MCF 10A (cell line): ENCODE measurements at regions of chr1 and their contacts with region 1.

Region 1: DNA sequence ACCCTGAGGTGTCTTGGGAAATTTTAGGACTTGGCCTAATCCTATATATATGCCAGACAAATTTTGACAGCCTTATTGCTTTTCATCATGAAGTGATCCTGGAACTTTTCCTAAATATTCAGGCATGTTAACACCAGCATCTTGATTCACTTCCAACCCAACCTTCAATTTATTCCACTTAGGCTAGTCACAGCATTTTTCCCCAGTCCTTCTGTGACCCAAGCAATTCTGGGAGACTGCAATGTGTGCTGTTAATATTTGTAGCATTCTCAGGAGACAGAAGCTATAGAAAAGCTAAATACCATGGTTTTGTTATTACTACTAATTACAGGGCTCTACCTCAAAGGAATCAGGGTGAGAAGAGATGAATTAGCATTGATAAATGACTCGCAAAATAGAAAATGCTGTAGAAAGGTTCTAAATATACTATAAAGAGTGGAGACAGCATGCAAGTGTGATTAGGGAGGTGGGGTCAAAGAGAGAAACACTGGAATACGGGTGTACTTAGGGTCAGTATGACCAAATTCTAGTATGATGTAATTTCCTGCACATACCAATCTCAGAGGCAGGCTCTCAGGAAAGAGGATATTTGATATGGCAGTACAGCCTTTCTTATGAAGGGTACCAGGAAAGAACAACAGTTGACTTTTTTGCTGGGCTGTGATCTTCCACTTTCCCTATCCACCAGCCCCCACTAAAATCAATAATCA is 29.1 kb downstream of the PRRX1 start:
- DNase-seq: peak; percentile 35
- H3K4me3 Mint-ChIP-seq: no peak overlapping the region
- H3K27ac Mint-ChIP-seq: no peak overlapping the region
- H3K4me1 Mint-ChIP-seq: peaks cover 21% of the 10 kb centered on the region
- H3K27me3 Mint-ChIP-seq: no peaks in the 10 kb centered on the region
- CTCF ChIP-seq: no peak

Region 2: DNA sequence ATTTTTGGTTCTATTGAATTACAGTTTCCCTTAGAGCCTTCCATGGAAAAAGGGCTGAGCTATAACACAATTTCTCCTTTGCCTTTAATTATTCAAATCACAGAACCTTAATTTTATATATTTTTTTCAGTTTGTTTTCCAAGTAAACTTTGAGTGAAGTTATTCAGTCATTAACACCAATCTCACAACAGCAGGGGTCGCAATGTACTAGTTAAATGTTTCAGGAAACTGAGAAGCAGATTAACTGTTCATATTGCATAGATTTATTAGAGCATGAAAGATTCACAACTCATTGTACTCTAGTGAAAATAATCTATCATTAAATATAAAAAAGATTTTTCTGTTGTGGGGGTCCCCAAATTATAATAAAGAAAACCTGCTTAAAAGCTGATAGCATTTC is 682.6 kb before region 1 on chr1:
- CTCF ChIA-PET with region 1: no interaction called
- POLR2A ChIA-PET with region 1: interaction called, 3 read pairs
- intact Hi-C with region 1: loop called (anchors 1 kb)
- DNase-seq: peak; percentile 74
- H3K4me3 Mint-ChIP-seq: no peak overlapping the region
- H3K27ac Mint-ChIP-seq: no peak overlapping the region
- H3K4me1 Mint-ChIP-seq: no peaks in the 10 kb centered on the region
- H3K27me3 Mint-ChIP-seq: no peaks in the 10 kb centered on the region
- CTCF ChIP-seq: peak; percentile 54

Region 3: GRCh38 chr1:170623171-170623570 is 69.8 kb before region 1 on chr1:
- CTCF ChIA-PET with region 1: no interaction called
- POLR2A ChIA-PET with region 1: no interaction called
- intact Hi-C with region 1: no loop called
- DNase-seq: peak; percentile 85
- H3K4me3 Mint-ChIP-seq: no peak overlapping the region
- H3K27ac Mint-ChIP-seq: peak overlapping the region; percentile 73
- H3K4me1 Mint-ChIP-seq: peaks cover 12% of the 10 kb centered on the region
- H3K27me3 Mint-ChIP-seq: no peaks in the 10 kb centered on the region
- CTCF ChIP-seq: no peak

Region 4: GRCh38 chr1:170634293-170634692 is 58.7 kb before region 1 on chr1:
- CTCF ChIA-PET with region 1: interaction called, 10 read pairs
- POLR2A ChIA-PET with region 1: no interaction called
- intact Hi-C with region 1: no loop called
- DNase-seq: no peak
- H3K4me3 Mint-ChIP-seq: no peak overlapping the region
- H3K27ac Mint-ChIP-seq: no peak overlapping the region
- H3K4me1 Mint-ChIP-seq: no peaks in the 10 kb centered on the region
- H3K27me3 Mint-ChIP-seq: no peaks in the 10 kb centered on the region
- CTCF ChIP-seq: no peak

Region 5: GRCh38 chr1:170707959-170708655 is 15.1 kb after region 1 on chr1:
- CTCF ChIA-PET with region 1: interaction called, 18 read pairs
- POLR2A ChIA-PET with region 1: interaction called, 5 read pairs
- intact Hi-C with region 1: no loop called
- DNase-seq: peak; percentile 93
- H3K4me3 Mint-ChIP-seq: no peak overlapping the region
- H3K27ac Mint-ChIP-seq: peak overlapping the region; percentile 67
- H3K4me1 Mint-ChIP-seq: peaks cover 25% of the 10 kb centered on the region
- H3K27me3 Mint-ChIP-seq: no peaks in the 10 kb centered on the region
- CTCF ChIP-seq: no peak

Region 6: GRCh38 chr1:170881268-170882265 is 188.5 kb after region 1 on chr1:
- CTCF ChIA-PET with region 1: interaction called, 8 read pairs
- POLR2A ChIA-PET with region 1: no interaction called
- intact Hi-C with region 1: loop called (anchors 2 kb)
- DNase-seq: peak; percentile 69
- H3K4me3 Mint-ChIP-seq: no peak overlapping the region
- H3K27ac Mint-ChIP-seq: no peak overlapping the region
- H3K4me1 Mint-ChIP-seq: peaks cover 7% of the 10 kb centered on the region
- H3K27me3 Mint-ChIP-seq: peaks cover 12% of the 10 kb centered on the region
- CTCF ChIP-seq: peak; percentile 63